ENCODE measurements at regions of chr11 and their contacts with region 1.

Region 1: DNA sequence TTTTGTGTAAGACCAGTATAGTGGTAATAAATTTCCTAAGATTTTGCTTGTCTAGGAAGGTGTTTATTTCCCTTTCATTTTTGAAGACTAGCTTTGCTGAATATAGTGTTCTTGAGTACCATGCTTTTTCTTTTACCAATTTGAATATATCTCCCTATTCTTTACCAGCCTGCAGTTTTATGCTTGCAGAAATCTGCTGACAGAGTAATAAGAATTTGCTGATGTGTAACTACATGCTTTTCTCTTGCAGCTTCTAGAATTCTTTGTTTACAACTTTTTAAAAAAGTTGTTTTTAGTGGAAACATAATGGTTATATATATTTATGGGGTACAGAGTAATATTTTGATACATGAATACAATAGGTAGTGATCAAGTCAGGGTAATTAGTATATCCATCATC is 324.8 kb upstream of the FOLH1 start:
- DNase-seq: no peak
- ATAC-seq: no peak
- H3K4me3 ChIP-seq: no peak overlapping the region
- H3K27ac ChIP-seq: no peak overlapping the region
- H3K4me1 ChIP-seq: no peaks in the 10 kb centered on the region
- H3K27me3 ChIP-seq: no peaks in the 10 kb centered on the region
- CTCF ChIP-seq: no peak
- POLR2A ChIP-seq: no peak
- RAD21 ChIP-seq: no peak

Region 2: DNA sequence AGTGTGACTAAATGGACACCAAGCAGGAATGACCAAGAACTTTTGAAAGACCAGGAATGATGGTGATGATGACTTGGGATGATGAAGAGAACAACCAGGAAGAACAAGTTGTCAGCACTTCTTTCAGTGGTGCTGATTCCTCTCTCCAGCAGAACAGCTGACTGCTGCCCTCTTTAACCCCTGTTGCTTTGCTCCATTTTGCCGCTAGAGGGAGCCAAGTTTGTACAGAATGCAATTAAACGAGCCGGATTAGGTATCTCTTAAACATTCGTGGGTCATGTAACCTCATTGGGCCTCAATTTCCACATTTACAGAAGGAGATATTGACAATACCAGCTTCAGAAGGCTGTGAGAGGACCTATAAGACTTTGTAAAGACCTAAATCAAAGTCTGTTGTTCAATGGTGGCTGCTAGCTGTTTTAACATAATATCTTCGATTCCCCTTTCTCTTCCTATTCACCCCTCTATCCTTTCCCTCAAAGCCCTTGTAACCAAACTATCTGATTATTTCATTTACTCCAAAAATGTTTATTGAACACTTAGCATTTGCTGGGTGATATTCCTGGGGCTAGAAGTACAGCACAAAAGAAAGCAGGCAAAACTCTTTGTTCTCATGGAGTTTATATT is 1225.3 kb before region 1 on chr11:
- CTCF ChIA-PET with region 1: no interaction called
- POLR2A ChIA-PET with region 1: no interaction called
- RAD21 ChIA-PET with region 1: no interaction called
- intact Hi-C with region 1: loop called (anchors 5 kb)
- DNase-seq: peak; percentile 40
- ATAC-seq: peak; percentile 69
- H3K4me3 ChIP-seq: no peak overlapping the region
- H3K27ac ChIP-seq: no peak overlapping the region
- H3K4me1 ChIP-seq: no peaks in the 10 kb centered on the region
- H3K27me3 ChIP-seq: no peaks in the 10 kb centered on the region
- CTCF ChIP-seq: peak; percentile 25 to 94 (median 88); a peak in 5 of 6 replicates
- POLR2A ChIP-seq: no peak
- RAD21 ChIP-seq: peak; percentile 69

Region 3: DNA sequence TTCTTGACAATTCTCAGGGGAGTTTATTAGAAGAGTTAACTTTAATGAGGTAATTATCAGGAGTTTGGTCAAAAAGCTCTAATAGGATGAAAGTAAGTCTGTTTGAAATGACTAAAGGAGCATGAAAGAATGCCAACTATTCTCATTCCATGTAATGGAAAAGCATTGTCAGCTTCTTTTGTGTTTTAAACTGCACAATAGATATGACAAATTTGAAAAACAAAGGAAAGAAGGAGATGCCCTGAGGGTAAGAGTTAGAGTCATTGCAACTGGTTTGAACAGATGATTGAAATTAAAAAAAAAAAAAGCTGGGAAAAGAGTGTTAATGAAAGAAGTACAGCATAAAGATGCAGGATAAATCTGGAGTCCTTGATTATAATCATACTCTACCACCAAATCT is 28.0 kb before region 1 on chr11:
- CTCF ChIA-PET with region 1: no interaction called
- POLR2A ChIA-PET with region 1: no interaction called
- RAD21 ChIA-PET with region 1: no interaction called
- intact Hi-C with region 1: no loop called
- DNase-seq: no peak
- ATAC-seq: no peak
- H3K4me3 ChIP-seq: no peak overlapping the region
- H3K27ac ChIP-seq: no peak overlapping the region
- H3K4me1 ChIP-seq: no peaks in the 10 kb centered on the region
- H3K27me3 ChIP-seq: no peaks in the 10 kb centered on the region
- CTCF ChIP-seq: no peak
- POLR2A ChIP-seq: no peak
- RAD21 ChIP-seq: no peak